GM12878 (cell line): ENCODE measurements at regions of chrX and their contacts with region 1.

Region 1: GRCh38 chrX:13506574-13506973 is 62.8 kb upstream of the EGFL6 start:
- DNase-seq: no peak
- ATAC-seq: peak; percentile 32; the same call in 1 of the 3 replicates
- H3K4me3 ChIP-seq: no peak overlapping the region
- H3K27ac ChIP-seq: no peak overlapping the region
- H3K4me1 ChIP-seq: no peaks in the 10 kb centered on the region
- H3K27me3 ChIP-seq: no peaks in the 10 kb centered on the region
- CTCF ChIP-seq: peak; percentile 71 to 82 (median 74)
- EP300 ChIP-seq: no peak
- POLR2A ChIP-seq: no peak
- RAD21 ChIP-seq: peak; percentile 96

Region 2: GRCh38 chrX:12751887-12752286 is 754.7 kb before region 1 on chrX:
- CTCF ChIA-PET with region 1: no interaction called
- POLR2A ChIA-PET with region 1: no interaction called
- RAD21 ChIA-PET with region 1: no interaction called
- SMC1A ChIA-PET with region 1: no interaction called
- in situ Hi-C with region 1: no loop called
- intact Hi-C with region 1: no loop called
- DNase-seq: no peak
- ATAC-seq: no peak
- H3K4me3 ChIP-seq: no peak overlapping the region
- H3K27ac ChIP-seq: no peak overlapping the region
- H3K4me1 ChIP-seq: no peaks in the 10 kb centered on the region
- H3K27me3 ChIP-seq: no peaks in the 10 kb centered on the region; a peak in 2 of 4 replicates
- CTCF ChIP-seq: no peak
- EP300 ChIP-seq: no peak
- POLR2A ChIP-seq: no peak
- RAD21 ChIP-seq: no peak

Region 3: GRCh38 chrX:13432414-13433297 is 73.9 kb before region 1 on chrX:
- CTCF ChIA-PET with region 1: no interaction called
- POLR2A ChIA-PET with region 1: no interaction called
- RAD21 ChIA-PET with region 1: no interaction called
- SMC1A ChIA-PET with region 1: no interaction called
- in situ Hi-C with region 1: no loop called
- intact Hi-C with region 1: no loop called
- DNase-seq: no peak
- ATAC-seq: peak; percentile 52; the same call in 1 of the 3 replicates
- H3K4me3 ChIP-seq: no peak overlapping the region
- H3K27ac ChIP-seq: no peak overlapping the region
- H3K4me1 ChIP-seq: no peaks in the 10 kb centered on the region
- H3K27me3 ChIP-seq: no peaks in the 10 kb centered on the region
- CTCF ChIP-seq: no peak
- EP300 ChIP-seq: no peak
- POLR2A ChIP-seq: no peak
- RAD21 ChIP-seq: no peak

Region 4: GRCh38 chrX:13520936-13521335 is 14.4 kb after region 1 on chrX:
- CTCF ChIA-PET with region 1: interaction called, 14 read pairs
- POLR2A ChIA-PET with region 1: interaction called, 3 read pairs
- RAD21 ChIA-PET with region 1: interaction called, 3 read pairs
- SMC1A ChIA-PET with region 1: interaction called, 7 read pairs
- in situ Hi-C with region 1: no loop called
- intact Hi-C with region 1: no loop called
- DNase-seq: no peak
- ATAC-seq: no peak
- H3K4me3 ChIP-seq: no peak overlapping the region
- H3K27ac ChIP-seq: no peak overlapping the region
- H3K4me1 ChIP-seq: no peaks in the 10 kb centered on the region
- H3K27me3 ChIP-seq: no peaks in the 10 kb centered on the region
- CTCF ChIP-seq: no peak
- EP300 ChIP-seq: no peak
- POLR2A ChIP-seq: no peak
- RAD21 ChIP-seq: no peak

Region 5: DNA sequence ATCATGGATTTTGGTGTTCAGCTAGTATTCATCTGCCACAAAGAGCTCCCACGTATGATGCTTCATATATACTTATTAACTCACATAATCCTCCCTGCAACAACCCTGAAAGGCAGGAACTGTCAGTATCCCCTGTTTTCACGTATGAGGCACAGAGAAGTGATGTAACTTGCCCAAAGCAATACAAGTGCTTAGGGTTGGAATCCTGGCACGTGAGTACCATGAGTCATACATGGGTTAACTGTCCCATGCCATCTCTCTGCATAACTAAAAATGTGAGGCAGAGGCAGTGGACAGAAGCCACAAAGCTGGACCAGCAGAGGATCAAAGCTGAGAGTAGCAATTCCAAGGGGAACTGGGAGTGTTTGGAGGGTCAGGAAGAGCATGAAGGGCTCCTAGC is 27.2 kb after region 1 on chrX:
- CTCF ChIA-PET with region 1: interaction called, 13 read pairs
- POLR2A ChIA-PET with region 1: no interaction called
- RAD21 ChIA-PET with region 1: no interaction called
- SMC1A ChIA-PET with region 1: interaction called, 5 read pairs
- in situ Hi-C with region 1: no loop called
- intact Hi-C with region 1: no loop called
- DNase-seq: no peak
- ATAC-seq: no peak
- H3K4me3 ChIP-seq: no peak overlapping the region
- H3K27ac ChIP-seq: no peak overlapping the region
- H3K4me1 ChIP-seq: no peaks in the 10 kb centered on the region
- H3K27me3 ChIP-seq: 0 out of 4 replicates have a peak, but pooled peaks cover 0 to 3% of the 10 kb centered on the region in 2 experiments
- CTCF ChIP-seq: no peak
- EP300 ChIP-seq: no peak
- POLR2A ChIP-seq: no peak
- RAD21 ChIP-seq: no peak

Region 6: GRCh38 chrX:13646154-13646549 is 139.6 kb after region 1 on chrX:
- CTCF ChIA-PET with region 1: interaction called, 143 read pairs
- POLR2A ChIA-PET with region 1: no interaction called
- RAD21 ChIA-PET with region 1: interaction called, 48 read pairs
- SMC1A ChIA-PET with region 1: interaction called, 86 read pairs
- in situ Hi-C with region 1: loop called (anchors 10 kb)
- intact Hi-C with region 1: loop called (anchors 1 kb)
- DNase-seq: no peak
- ATAC-seq: peak; percentile 80
- H3K4me3 ChIP-seq: no peak overlapping the region
- H3K27ac ChIP-seq: no peak overlapping the region
- H3K4me1 ChIP-seq: no peaks in the 10 kb centered on the region
- H3K27me3 ChIP-seq: no peaks in the 10 kb centered on the region; a peak in 1 of 4 replicates
- CTCF ChIP-seq: peak; percentile 67 to 80 (median 76)
- EP300 ChIP-seq: no peak
- POLR2A ChIP-seq: no peak
- RAD21 ChIP-seq: peak; percentile 72

Region 7: DNA sequence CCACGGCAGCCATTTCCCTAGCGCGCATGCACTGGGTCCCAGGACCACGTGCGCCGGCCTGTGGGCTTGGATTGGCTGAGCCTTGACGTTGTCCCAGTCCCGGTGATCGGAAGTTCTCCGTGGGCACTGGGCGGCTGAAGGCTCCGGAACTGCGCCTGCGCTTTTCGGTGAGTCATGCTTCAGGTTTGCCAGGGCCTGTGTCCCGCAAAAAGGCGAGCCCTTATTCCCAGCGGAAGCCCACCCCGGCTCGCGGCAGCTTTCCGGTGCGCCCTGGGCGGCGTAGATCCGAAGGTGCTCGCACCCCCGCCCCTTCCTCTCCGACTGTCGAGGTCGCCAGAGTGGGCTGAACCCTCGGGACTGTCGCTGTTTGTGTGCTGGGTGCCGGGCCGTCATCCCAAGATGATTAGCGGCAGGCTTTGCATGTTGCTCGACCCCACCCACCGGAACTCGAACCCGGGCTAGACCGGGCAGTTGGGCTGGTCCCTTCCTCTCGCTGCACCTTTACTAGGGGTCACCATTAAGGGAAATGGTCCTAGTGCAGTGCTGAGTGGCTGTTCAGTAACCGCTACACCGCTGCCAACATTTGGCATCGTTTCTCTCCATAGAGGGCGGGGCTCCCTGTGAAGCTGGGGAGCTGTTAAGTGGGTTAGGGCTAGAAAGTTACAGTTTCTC is 146.6 kb after region 1 on chrX and contains the start of gene TCEANC:
- CTCF ChIA-PET with region 1: interaction called, 26 read pairs
- POLR2A ChIA-PET with region 1: no interaction called
- RAD21 ChIA-PET with region 1: interaction called, 10 read pairs
- SMC1A ChIA-PET with region 1: interaction called, 4 read pairs
- in situ Hi-C with region 1: loop called (anchors 10 kb)
- intact Hi-C with region 1: no loop called
- DNase-seq: peak; percentile 89
- ATAC-seq: peak; percentile 98
- H3K4me3 ChIP-seq: peak within 1 kb of the TSS; percentile 76
- H3K27ac ChIP-seq: peak within 1 kb of the TSS; percentile 71
- H3K4me1 ChIP-seq: peaks cover 7% of the 10 kb centered on the region
- H3K27me3 ChIP-seq: no peaks in the 10 kb centered on the region
- CTCF ChIP-seq: no peak
- EP300 ChIP-seq: no peak
- POLR2A ChIP-seq: peak; percentile 85
- RAD21 ChIP-seq: no peak
- polyA plus RNA-seq, gene TCEANC: 1.5 to 4.0 TPM

Region 8: GRCh38 chrX:13898083-13898482 is 391.5 kb after region 1 on chrX:
- CTCF ChIA-PET with region 1: no interaction called
- POLR2A ChIA-PET with region 1: no interaction called
- RAD21 ChIA-PET with region 1: interaction called, 3 read pairs
- SMC1A ChIA-PET with region 1: interaction called, 3 read pairs
- in situ Hi-C with region 1: no loop called
- intact Hi-C with region 1: loop called (anchors 10 kb)
- DNase-seq: peak; percentile 13
- ATAC-seq: peak; percentile 98
- H3K4me3 ChIP-seq: no peak overlapping the region
- H3K27ac ChIP-seq: no peak overlapping the region
- H3K4me1 ChIP-seq: no peaks in the 10 kb centered on the region
- H3K27me3 ChIP-seq: no peaks in the 10 kb centered on the region; a peak in 2 of 4 replicates
- CTCF ChIP-seq: peak; percentile 57 to 66 (median 58)
- EP300 ChIP-seq: no peak
- POLR2A ChIP-seq: no peak
- RAD21 ChIP-seq: peak; percentile 70

Region 9: GRCh38 chrX:14029425-14030173 is 523.0 kb after region 1 on chrX and contains the start of gene GEMIN8:
- CTCF ChIA-PET with region 1: interaction called, 70 read pairs
- POLR2A ChIA-PET with region 1: no interaction called
- RAD21 ChIA-PET with region 1: interaction called, 29 read pairs
- SMC1A ChIA-PET with region 1: interaction called, 41 read pairs
- in situ Hi-C with region 1: loop called (anchors 5 kb)
- intact Hi-C with region 1: loop called (anchors 1 kb)
- DNase-seq: peak; percentile 46
- ATAC-seq: peak; percentile 84
- H3K4me3 ChIP-seq: peak within 1 kb of the TSS; percentile 81
- H3K27ac ChIP-seq: peak within 1 kb of the TSS; percentile 77
- H3K4me1 ChIP-seq: peaks cover 6% of the 10 kb centered on the region
- H3K27me3 ChIP-seq: no peaks in the 10 kb centered on the region
- CTCF ChIP-seq: no peak
- EP300 ChIP-seq: 0 out of 4 replicates have a peak, but pooled peaks of 1 of the 2 experiments have one; percentile 4
- POLR2A ChIP-seq: peak; percentile 91
- RAD21 ChIP-seq: no peak
- polyA plus RNA-seq, gene GEMIN8: 18.4 to 29.5 TPM